Endothelial cell of umbilical vein (primary cell): ENCODE measurements at regions of chr2 and their contacts with region 1.

Region 1: DNA sequence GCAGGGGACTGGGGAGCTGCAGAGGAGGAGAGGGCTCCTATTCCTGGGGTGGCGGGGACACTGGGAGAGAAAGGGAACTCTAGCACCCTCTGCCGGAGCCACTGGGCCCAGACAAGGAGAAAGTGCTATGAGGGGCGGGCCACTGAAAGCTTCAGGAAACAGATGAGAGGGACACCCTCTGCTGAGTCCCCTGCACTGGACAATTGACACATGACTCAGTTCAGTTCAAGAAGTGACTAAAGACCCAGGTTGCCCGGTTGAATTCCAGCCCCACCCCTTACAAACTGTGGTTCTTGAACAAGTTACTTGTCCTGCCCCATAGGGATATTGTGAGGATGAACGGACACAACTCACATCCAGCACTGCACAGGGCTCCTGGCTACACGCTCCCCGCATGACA is 5.0 kb downstream of the RUFY4 start:
- DNase-seq: peak; percentile 17
- H3K4me3 ChIP-seq: no peak overlapping the region
- H3K27ac ChIP-seq: no peak overlapping the region
- H3K4me1 ChIP-seq: no peaks in the 10 kb centered on the region
- H3K27me3 ChIP-seq: no peaks in the 10 kb centered on the region
- CTCF ChIP-seq: peak; percentile 42 to 71
- POLR2A ChIP-seq: no peak

Region 2: GRCh38 chr2:217685255-217685605 is 388.8 kb before region 1 on chr2:
- CTCF ChIA-PET with region 1: no interaction called
- POLR2A ChIA-PET with region 1: no interaction called
- dilution Hi-C with region 1: no loop called
- intact Hi-C with region 1: no loop called
- DNase-seq: no peak
- H3K4me3 ChIP-seq: no peak overlapping the region
- H3K27ac ChIP-seq: no peak overlapping the region
- H3K4me1 ChIP-seq: no peaks in the 10 kb centered on the region
- H3K27me3 ChIP-seq: peaks cover 0 to 3% of the 10 kb centered on the region in 2 experiments
- CTCF ChIP-seq: no peak
- POLR2A ChIP-seq: no peak

Region 3: GRCh38 chr2:218046238-218046637 is 27.8 kb before region 1 on chr2:
- CTCF ChIA-PET with region 1: interaction called, 14 read pairs
- POLR2A ChIA-PET with region 1: no interaction called
- dilution Hi-C with region 1: no loop called
- intact Hi-C with region 1: no loop called
- DNase-seq: no peak
- H3K4me3 ChIP-seq: no peak overlapping the region
- H3K27ac ChIP-seq: no peak overlapping the region
- H3K4me1 ChIP-seq: no peaks in the 10 kb centered on the region
- H3K27me3 ChIP-seq: peaks cover 6 to 13% of the 10 kb centered on the region in 2 experiments
- CTCF ChIP-seq: no peak
- POLR2A ChIP-seq: no peak

Region 4: DNA sequence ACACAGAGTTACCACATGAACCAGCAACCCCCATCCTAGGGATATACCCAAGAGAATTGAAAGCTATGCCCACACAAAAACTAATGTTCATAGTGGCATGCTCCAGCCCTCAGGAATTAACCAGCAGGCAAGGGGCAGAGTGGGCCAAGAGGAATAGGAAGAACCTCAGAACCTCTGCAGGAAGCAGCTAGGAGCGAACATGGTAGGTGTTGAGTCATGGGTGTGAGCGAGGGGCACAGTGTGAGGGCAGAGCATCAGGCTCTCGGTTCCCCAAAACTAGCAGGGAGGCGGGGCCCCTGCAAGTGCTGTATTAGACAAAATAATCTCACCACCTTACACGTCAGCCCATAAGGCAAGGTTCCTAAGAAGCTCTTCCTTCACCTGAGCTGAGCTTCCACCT is 10.5 kb before region 1 on chr2:
- CTCF ChIA-PET with region 1: interaction called, 22 read pairs
- POLR2A ChIA-PET with region 1: no interaction called
- dilution Hi-C with region 1: no loop called
- intact Hi-C with region 1: no loop called
- DNase-seq: no peak
- H3K4me3 ChIP-seq: no peak overlapping the region
- H3K27ac ChIP-seq: no peak overlapping the region
- H3K4me1 ChIP-seq: no peaks in the 10 kb centered on the region
- H3K27me3 ChIP-seq: peaks cover 7 to 12% of the 10 kb centered on the region in 2 experiments
- CTCF ChIP-seq: no peak
- POLR2A ChIP-seq: no peak

Region 5: DNA sequence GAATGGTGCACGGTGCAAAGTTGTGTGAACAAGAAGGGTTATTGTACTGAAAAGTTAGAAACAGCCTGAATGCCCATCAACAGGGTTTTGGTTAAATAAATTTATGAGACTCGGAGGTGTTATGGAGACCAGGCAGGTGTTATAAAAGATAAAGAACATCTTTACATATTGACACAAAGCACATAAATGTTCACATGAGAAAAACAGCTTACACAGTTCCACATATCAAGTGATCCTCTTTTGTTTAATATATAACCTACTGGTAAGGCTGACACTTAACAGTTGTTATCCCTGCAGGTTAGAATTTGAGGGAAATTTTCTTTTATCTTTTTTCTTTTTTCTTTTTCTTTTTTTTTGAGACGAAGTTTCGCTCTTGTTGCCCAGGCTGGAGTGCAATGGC is 122.9 kb after region 1 on chr2:
- CTCF ChIA-PET with region 1: no interaction called
- POLR2A ChIA-PET with region 1: no interaction called
- dilution Hi-C with region 1: no loop called
- intact Hi-C with region 1: loop called (anchors 1 kb)
- DNase-seq: no peak
- H3K4me3 ChIP-seq: no peak overlapping the region
- H3K27ac ChIP-seq: no peak overlapping the region
- H3K4me1 ChIP-seq: no peaks in the 10 kb centered on the region
- H3K27me3 ChIP-seq: peaks cover 0 to 4% of the 10 kb centered on the region in 2 experiments
- CTCF ChIP-seq: no peak
- POLR2A ChIP-seq: no peak